Activated B cell treated with CpG ODN at 0.5 μM for 24 hours (primary cell): ENCODE measurements at regions of chr1 and their contacts with region 1.

Region 1: GRCh38 chr1:205211169-205211838 is at the start of gene DSTYK:
- DNase-seq: peak; percentile 81
- ATAC-seq: peak; percentile 82
- H3K4me3 Mint-ChIP-seq: peak within 1 kb of the TSS; percentile 95
- H3K27ac Mint-ChIP-seq: peak within 1 kb of the TSS; percentile 97
- H3K4me1 Mint-ChIP-seq: peaks cover 35% of the 10 kb centered on the region
- H3K27me3 Mint-ChIP-seq: no peaks in the 10 kb centered on the region
- CTCF ChIP-seq: no peak
- total RNA-seq, gene DSTYK: 7.3 and 9.6 TPM in 2 replicates

Region 2: DNA sequence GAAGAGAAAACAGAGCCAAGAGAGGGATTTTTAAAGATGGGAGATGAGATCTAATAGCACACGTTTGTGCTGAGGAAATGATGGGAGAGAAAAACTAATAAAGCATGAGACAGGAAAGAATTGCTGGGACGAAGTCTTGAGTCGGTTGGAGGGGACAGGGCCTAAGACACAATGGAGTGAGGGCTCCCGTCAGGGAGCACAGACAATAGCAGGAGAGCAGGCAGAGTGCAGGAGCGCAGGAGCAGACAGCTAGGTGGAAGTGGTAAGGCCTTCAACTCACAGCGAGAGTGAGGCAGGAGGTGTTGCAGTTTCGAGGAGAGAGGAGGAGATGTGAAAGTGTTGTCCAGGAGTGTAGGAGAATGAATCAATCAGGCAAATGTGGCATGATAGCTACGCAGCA is 1198.3 kb before region 1 on chr1:
- CTCF ChIA-PET with region 1: no interaction called
- POLR2A ChIA-PET with region 1: no interaction called
- intact Hi-C with region 1: no loop called
- DNase-seq: no peak
- ATAC-seq: no peak
- H3K4me3 Mint-ChIP-seq: no peak overlapping the region
- H3K27ac Mint-ChIP-seq: no peak overlapping the region
- H3K4me1 Mint-ChIP-seq: no peaks in the 10 kb centered on the region
- H3K27me3 Mint-ChIP-seq: peaks cover 3% of the 10 kb centered on the region
- CTCF ChIP-seq: no peak

Region 3: DNA sequence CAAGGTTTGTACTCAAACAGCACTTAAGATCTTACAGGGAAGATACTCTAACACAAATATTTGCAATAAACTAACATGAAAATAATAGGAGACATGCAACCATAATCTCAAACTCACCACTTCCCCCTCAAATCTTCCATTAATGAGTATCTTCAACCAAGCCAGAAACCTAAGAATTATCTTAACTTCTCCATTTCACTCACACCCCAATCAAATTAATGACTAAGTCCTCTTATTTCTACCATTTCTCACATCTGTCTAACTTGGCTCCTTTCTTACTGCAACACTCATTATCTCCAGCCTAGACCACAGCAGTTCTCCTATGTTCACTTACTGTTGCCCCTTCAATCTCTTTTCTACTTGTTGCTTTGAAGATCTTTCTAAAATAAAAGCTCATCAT is 100.0 kb before region 1 on chr1:
- CTCF ChIA-PET with region 1: no interaction called
- POLR2A ChIA-PET with region 1: no interaction called
- intact Hi-C with region 1: no loop called
- DNase-seq: no peak
- ATAC-seq: peak; percentile 62
- H3K4me3 Mint-ChIP-seq: no peak overlapping the region
- H3K27ac Mint-ChIP-seq: peak overlapping the region; percentile 5
- H3K4me1 Mint-ChIP-seq: peaks cover 21% of the 10 kb centered on the region
- H3K27me3 Mint-ChIP-seq: no peaks in the 10 kb centered on the region
- CTCF ChIP-seq: no peak

Region 4: DNA sequence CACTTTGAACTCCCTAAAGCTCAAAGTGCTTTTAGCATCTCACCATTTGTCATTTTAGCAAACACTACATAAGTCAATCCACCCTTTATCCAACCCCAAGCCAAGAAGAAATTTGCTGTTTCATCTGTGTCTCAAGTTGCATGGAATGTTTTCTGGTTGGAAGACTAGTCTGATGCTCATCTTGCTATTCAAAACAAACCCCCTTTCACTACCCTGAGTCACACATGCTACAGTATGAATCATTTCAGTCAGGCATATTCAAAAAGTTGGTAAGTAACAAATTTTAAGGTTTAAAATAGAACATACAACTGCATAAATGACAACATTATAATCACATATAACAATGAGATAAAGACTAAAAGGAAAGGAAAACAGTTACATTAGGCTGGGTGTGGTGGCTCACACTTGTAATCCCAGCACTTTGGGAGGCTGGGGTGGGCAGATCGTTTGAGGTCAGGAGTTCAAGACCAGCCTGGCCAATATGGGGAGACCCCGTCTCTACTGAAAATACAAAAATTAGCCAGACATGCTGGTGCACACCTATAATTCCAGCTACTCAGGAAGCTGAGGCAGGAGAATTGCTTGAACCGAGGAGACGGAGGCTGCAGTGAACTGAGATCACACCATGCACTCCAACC is 38.5 kb before region 1 on chr1:
- CTCF ChIA-PET with region 1: no interaction called
- POLR2A ChIA-PET with region 1: no interaction called
- intact Hi-C with region 1: no loop called
- DNase-seq: no peak
- ATAC-seq: no peak
- H3K4me3 Mint-ChIP-seq: no peak overlapping the region
- H3K27ac Mint-ChIP-seq: no peak overlapping the region
- H3K4me1 Mint-ChIP-seq: no peaks in the 10 kb centered on the region
- H3K27me3 Mint-ChIP-seq: no peaks in the 10 kb centered on the region
- CTCF ChIP-seq: no peak

Region 5: GRCh38 chr1:205227584-205228006 is 16.3 kb after region 1 on chr1 and contains the start of gene TMCC2:
- CTCF ChIA-PET with region 1: interaction called, 7 read pairs
- POLR2A ChIA-PET with region 1: interaction called, 19 read pairs
- intact Hi-C with region 1: loop called (anchors 1 kb)
- DNase-seq: peak; percentile 73
- ATAC-seq: peak; percentile 88
- H3K4me3 Mint-ChIP-seq: peak within 1 kb of the TSS; percentile 84
- H3K27ac Mint-ChIP-seq: peak within 1 kb of the TSS; percentile 42
- H3K4me1 Mint-ChIP-seq: peaks cover 29% of the 10 kb centered on the region
- H3K27me3 Mint-ChIP-seq: peaks cover 9% of the 10 kb centered on the region
- CTCF ChIP-seq: no peak
- total RNA-seq, gene TMCC2: 1.2 and 1.4 TPM in 2 replicates

Region 6: GRCh38 chr1:205237526-205238484 is 26.5 kb after region 1 on chr1:
- CTCF ChIA-PET with region 1: no interaction called
- POLR2A ChIA-PET with region 1: no interaction called
- intact Hi-C with region 1: no loop called
- DNase-seq: peak; percentile 10
- ATAC-seq: no peak
- H3K4me3 Mint-ChIP-seq: no peak overlapping the region
- H3K27ac Mint-ChIP-seq: no peak overlapping the region
- H3K4me1 Mint-ChIP-seq: peaks cover 20% of the 10 kb centered on the region
- H3K27me3 Mint-ChIP-seq: peaks cover 4% of the 10 kb centered on the region
- CTCF ChIP-seq: no peak